Pancreas (tissue), 10 donors: ENCODE measurements at regions of chr2 and their contacts with region 1.

Region 1: DNA sequence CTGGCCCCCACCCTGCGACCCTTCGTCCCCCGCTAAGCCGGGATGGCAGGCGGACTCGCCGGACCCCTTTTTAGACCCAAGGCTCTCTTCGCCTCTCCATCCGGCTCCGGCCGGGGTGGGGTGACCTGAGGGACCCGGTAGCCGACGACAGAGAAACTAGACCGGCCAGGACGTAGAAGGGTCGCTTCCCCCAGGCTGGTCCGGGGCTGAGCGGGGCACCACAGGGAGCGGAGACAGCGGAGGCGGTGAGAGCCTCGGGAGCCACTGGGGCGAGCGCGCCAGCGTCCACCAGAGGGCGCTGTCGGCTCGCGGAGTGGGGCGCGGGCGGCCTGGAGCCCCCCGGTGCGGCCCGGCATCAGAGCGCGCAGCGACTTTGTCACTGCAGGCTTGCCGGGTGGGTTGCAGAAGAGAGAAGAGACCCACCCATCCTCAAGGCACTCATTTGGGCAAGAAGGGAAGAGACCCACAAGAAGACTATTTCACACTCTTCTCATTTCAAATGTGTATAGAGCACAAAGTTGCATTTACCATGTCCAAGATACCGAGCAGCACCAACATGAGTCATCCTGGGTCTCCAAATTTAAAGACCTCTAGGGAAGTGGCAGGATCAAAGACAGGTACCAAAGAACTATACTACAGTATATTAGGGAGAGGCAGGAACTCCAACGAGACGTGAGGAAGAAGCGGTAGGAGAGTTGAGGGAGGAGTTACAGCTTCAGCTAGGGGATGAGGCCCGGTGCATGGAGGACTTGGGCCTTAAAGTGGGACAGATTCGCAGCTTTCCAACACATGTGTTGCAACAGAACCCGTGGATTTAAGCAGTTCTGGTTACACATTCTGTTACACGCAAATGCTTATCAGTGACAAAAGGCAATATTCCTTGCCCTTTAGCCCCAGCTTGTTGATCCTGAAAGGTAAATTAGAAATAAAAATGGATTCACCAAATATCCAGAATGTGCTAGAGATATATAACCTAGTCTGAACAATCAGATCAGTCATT is 7.6 kb upstream of the PRKCE start:
- DNase-seq: peak; percentile 46 to 95 (median 78)
- ATAC-seq: peak; percentile 98 to 99 (median 99)
- H3K4me3 ChIP-seq: peak overlapping the region; percentile 10 to 68 (median 28)
- H3K27ac ChIP-seq: no peak overlapping the region
- H3K4me1 ChIP-seq: peaks cover 0 to 3% (median 0%) of the 10 kb centered on the region in 3 donors
- H3K27me3 ChIP-seq: no peaks in the 10 kb centered on the region
- CTCF ChIP-seq: peak; percentile 94 to 99 (median 96)

Region 2: GRCh38 chr2:45778720-45779171 is 134.9 kb after region 1 on chr2:
- intact Hi-C with region 1: loop called in 1 of 3 experiments (anchors 10 kb)
- DNase-seq: peak in 4 of 6 donors; percentile 73 to 84 (median 75)
- ATAC-seq: peak; percentile 89 to 98 (median 94)
- H3K4me3 ChIP-seq: peak overlapping the region in 2 of 4 donors; percentile 12 to 17
- H3K27ac ChIP-seq: peak overlapping the region in 1 of 4 donors; percentile 12
- H3K4me1 ChIP-seq: peaks cover 0 to 6% (median 0%) of the 10 kb centered on the region in 3 donors
- H3K27me3 ChIP-seq: no peaks in the 10 kb centered on the region
- CTCF ChIP-seq: peak; percentile 54 to 75 (median 67)